Activated T-helper 1 cell treated with anti-CD3 and anti-CD28 coated beads, Interleukin-12 subunit alpha, Interleukin-12 subunit beta, Interleukin-2, Interleukin-4 antibody, amounts not matched to agents 30 ng/mL and 10 ng/mL and 1 ng/mL, durations not matched to agents 14 hours and 24 hours and 36 hours (primary cell): ENCODE measurements at regions of chr1 and their contacts with region 1.

Region 1: DNA sequence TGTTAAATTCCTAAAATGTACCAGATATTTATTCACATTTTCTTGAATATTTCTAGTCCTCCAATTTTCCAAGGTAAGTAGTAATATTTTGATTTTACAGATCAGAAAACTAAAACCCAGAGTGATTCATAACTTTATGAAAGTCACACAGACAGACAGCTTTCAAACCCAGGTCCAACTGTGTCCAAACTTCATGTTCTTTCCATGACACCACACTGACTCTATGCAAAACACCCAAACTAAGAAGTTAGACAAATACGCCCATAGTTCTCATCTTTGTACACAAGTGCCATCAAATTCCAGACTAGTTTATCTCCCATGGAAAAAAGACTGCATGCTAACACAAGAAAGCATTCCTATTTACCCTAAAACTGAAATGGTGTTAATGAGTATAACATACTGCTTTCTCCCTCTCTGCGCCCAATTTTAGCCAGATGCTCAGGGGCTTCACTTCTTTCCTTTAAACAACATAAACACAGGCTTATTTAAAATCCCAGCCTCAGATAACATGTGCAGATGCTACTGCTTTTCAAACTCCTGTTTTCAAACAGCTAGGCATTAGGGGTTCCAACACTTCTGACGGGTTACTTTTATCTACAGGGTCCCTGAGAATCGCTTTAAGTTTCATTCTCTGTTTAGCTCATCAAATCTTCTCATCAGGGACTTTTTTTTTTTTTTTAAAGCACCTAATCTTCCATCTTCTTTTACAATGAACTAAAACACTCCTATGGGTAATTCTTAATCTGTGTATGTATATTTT is 44.6 kb downstream of the WASF2 start:
- DNase-seq: no peak
- H3K4me3 Mint-ChIP-seq: peak overlapping the region; percentile 73
- H3K27ac Mint-ChIP-seq: peak overlapping the region; percentile 96
- H3K4me1 Mint-ChIP-seq: peaks cover 37% of the 10 kb centered on the region
- H3K27me3 Mint-ChIP-seq: no peaks in the 10 kb centered on the region

Region 2: GRCh38 chr1:27257155-27257554 is 188.2 kb before region 1 on chr1:
- intact Hi-C with region 1: loop called (anchors 1 kb)
- DNase-seq: no peak
- H3K4me3 Mint-ChIP-seq: no peak overlapping the region
- H3K27ac Mint-ChIP-seq: no peak overlapping the region
- H3K4me1 Mint-ChIP-seq: peaks cover 30% of the 10 kb centered on the region
- H3K27me3 Mint-ChIP-seq: peaks cover 3% of the 10 kb centered on the region

Region 3: GRCh38 chr1:27416387-27417111 is 28.8 kb before region 1 on chr1:
- intact Hi-C with region 1: loop called (anchors 1 kb)
- DNase-seq: peak; percentile 44
- H3K4me3 Mint-ChIP-seq: no peak overlapping the region
- H3K27ac Mint-ChIP-seq: no peak overlapping the region
- H3K4me1 Mint-ChIP-seq: peaks cover 47% of the 10 kb centered on the region
- H3K27me3 Mint-ChIP-seq: no peaks in the 10 kb centered on the region

Region 4: DNA sequence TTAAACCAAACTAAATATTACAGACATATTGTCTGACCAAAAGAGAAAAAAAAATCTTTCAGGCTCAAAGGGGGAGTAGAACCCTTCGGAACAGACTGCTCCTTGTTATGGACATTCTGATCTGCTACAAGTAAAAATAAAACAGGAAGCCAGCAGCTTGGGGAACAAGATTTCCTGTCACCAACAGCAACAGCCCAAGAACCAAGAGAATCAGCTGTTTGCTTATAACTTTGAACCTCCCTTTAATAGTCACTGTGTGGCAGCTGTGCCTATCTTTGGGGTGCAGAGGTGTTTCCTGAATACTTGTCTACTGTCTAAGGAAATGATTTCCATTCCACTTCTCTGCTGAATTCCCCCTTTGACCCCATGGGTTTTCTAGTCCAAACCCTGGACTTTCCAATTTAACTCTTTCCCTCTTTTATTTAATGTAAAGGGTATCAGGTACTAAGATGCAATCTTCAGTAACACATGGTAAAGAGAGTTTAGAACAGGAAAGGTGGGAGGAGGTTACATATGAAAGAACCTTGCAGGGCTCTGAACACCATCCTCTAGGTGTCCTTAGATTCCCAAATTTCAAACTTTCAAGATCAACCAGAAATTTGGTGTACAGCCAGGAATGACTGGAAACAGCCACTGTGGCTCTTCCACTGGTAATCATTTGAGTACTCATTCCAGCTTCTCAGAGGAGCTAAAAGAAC is 14.3 kb before region 1 on chr1:
- intact Hi-C with region 1: loop called (anchors 1 kb)
- DNase-seq: peak; percentile 29
- H3K4me3 Mint-ChIP-seq: peak overlapping the region; percentile 59
- H3K27ac Mint-ChIP-seq: peak overlapping the region; percentile 75
- H3K4me1 Mint-ChIP-seq: peaks cover 70% of the 10 kb centered on the region
- H3K27me3 Mint-ChIP-seq: no peaks in the 10 kb centered on the region

Region 5: GRCh38 chr1:27481994-27482620 is 36.8 kb after region 1 on chr1:
- intact Hi-C with region 1: loop called (anchors 1 kb)
- DNase-seq: no peak
- H3K4me3 Mint-ChIP-seq: no peak overlapping the region
- H3K27ac Mint-ChIP-seq: peak overlapping the region; percentile 20
- H3K4me1 Mint-ChIP-seq: peaks cover 29% of the 10 kb centered on the region
- H3K27me3 Mint-ChIP-seq: no peaks in the 10 kb centered on the region

Region 6: DNA sequence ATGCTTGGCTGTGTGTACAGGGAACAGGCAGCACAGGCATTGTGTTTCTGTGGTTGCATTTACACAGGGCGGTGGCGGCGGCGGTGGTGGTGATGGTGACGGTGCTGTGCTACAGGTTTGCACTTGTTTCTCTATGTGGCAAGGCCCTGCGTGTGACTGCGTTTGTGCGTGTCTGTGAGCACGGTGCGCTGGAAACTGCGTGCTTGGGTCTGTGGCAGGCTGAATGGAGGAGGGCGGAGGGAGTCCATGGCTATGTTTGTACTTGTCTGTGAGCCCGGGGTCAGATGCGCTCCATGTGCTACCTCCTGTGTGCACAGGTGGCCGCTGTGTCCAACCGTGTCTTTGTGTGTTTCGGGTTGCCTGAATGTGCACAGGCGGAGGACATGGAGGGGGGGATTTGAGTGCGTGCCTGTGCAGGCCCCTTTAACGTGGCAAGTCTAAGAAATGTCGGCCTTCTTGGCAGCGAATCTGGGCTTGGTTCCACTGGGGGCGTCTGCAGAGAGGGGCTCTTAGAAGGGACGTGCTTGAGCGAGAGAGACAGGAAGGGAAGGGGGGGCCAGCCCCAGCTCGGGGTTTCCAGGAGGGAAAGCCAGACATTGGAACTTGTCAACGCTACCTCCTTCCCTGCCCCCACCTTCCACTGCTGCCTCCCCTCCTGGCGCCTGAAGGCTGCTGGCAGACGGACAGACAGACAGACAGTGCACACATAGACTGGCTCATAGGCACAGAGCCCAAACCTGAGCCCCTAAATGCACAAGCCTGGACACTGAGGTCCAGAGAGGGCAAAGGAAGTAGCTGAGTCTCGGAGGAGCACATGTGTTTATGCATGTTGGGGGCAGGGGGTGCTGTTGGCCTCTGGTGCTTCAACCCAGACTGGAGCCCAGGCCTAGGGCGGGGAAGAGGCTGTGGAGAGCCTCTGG is 77.3 kb after region 1 on chr1:
- intact Hi-C with region 1: loop called (anchors 2 kb)
- DNase-seq: peak; percentile 59
- H3K4me3 Mint-ChIP-seq: peak overlapping the region; percentile 90
- H3K27ac Mint-ChIP-seq: peak overlapping the region; percentile 97
- H3K4me1 Mint-ChIP-seq: peaks cover 79% of the 10 kb centered on the region
- H3K27me3 Mint-ChIP-seq: no peaks in the 10 kb centered on the region